Endothelial cell of umbilical vein (primary cell): ENCODE measurements at regions of chr3 and their contacts with region 1.

Region 1: GRCh38 chr3:185764163-185764979 is 60.5 kb downstream of the IGF2BP2 start:
- DNase-seq: peak; percentile 65
- H3K4me3 ChIP-seq: peak overlapping the region in 1 of 3 experiments; percentile 26
- H3K27ac ChIP-seq: peak overlapping the region; percentile 94
- H3K4me1 ChIP-seq: peaks cover 79% of the 10 kb centered on the region
- H3K27me3 ChIP-seq: no peaks in the 10 kb centered on the region
- CTCF ChIP-seq: no peak
- POLR2A ChIP-seq: no peak

Region 2: GRCh38 chr3:185677146-185677829 is 87.1 kb before region 1 on chr3:
- CTCF ChIA-PET with region 1: interaction called, 210 read pairs
- POLR2A ChIA-PET with region 1: no interaction called
- dilution Hi-C with region 1: no loop called
- intact Hi-C with region 1: loop called (anchors 1 kb)
- DNase-seq: peak; percentile 81
- H3K4me3 ChIP-seq: no peak overlapping the region
- H3K27ac ChIP-seq: peak overlapping the region; percentile 36
- H3K4me1 ChIP-seq: peaks cover 7% of the 10 kb centered on the region
- H3K27me3 ChIP-seq: no peaks in the 10 kb centered on the region
- CTCF ChIP-seq: peak; percentile 67 to 70
- POLR2A ChIP-seq: no peak

Region 3: GRCh38 chr3:185693985-185694653 is 70.3 kb before region 1 on chr3:
- CTCF ChIA-PET with region 1: interaction called, 20 read pairs
- POLR2A ChIA-PET with region 1: no interaction called
- dilution Hi-C with region 1: no loop called
- intact Hi-C with region 1: loop called (anchors 2 kb)
- DNase-seq: peak; percentile 49
- H3K4me3 ChIP-seq: no peak overlapping the region
- H3K27ac ChIP-seq: no peak overlapping the region
- H3K4me1 ChIP-seq: peaks cover 12% of the 10 kb centered on the region
- H3K27me3 ChIP-seq: no peaks in the 10 kb centered on the region
- CTCF ChIP-seq: no peak
- POLR2A ChIP-seq: no peak

Region 4: DNA sequence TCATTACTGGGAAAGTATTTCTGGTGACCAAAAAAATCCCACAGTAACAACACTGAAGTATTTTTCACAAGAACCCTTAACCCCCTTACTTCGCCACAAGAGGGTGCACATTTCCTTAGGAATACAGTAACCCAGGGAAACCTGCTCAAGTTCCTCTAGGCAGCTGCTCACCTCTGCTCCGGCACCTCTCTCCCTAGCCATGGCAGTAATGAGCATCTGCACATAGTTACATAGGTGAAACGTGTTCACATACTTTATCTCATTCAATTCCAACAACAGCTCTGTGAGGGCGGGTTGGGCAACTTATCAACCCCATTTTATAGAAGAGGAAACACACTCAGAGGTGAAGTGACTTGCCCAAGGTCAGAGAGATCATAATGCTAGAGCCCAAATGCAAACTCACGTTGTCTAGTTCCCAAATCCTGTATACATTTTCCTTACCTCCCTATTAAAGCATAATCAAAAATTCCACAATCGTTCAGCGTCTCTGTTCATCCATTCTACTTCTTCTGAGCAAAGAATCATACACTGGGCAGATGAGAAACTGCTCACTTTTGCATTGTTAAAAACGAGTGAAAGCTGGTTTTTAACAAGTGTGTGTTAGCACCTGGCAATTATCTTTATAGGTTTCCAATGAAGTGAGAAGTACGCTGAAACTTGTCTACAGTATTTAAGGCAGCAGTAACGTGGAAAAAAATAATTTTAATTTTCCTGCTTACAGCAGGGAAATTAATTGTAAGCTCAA is 30.2 kb before region 1 on chr3:
- CTCF ChIA-PET with region 1: interaction called, 347 read pairs
- POLR2A ChIA-PET with region 1: interaction called, 7 read pairs
- dilution Hi-C with region 1: no loop called
- intact Hi-C with region 1: loop called (anchors 1 kb)
- DNase-seq: peak; percentile 87
- H3K4me3 ChIP-seq: no peak overlapping the region
- H3K27ac ChIP-seq: peak overlapping the region; percentile 100
- H3K4me1 ChIP-seq: peaks cover 93% of the 10 kb centered on the region
- H3K27me3 ChIP-seq: no peaks in the 10 kb centered on the region
- CTCF ChIP-seq: peak; percentile 56 to 62
- POLR2A ChIP-seq: no peak

Region 5: GRCh38 chr3:185781759-185782158 is 17.4 kb after region 1 on chr3:
- CTCF ChIA-PET with region 1: interaction called, 71 read pairs
- POLR2A ChIA-PET with region 1: no interaction called
- dilution Hi-C with region 1: no loop called
- intact Hi-C with region 1: no loop called
- DNase-seq: no peak
- H3K4me3 ChIP-seq: no peak overlapping the region
- H3K27ac ChIP-seq: no peak overlapping the region
- H3K4me1 ChIP-seq: no peaks in the 10 kb centered on the region
- H3K27me3 ChIP-seq: no peaks in the 10 kb centered on the region
- CTCF ChIP-seq: no peak
- POLR2A ChIP-seq: no peak

Region 6: GRCh38 chr3:185807445-185808068 is 43.2 kb after region 1 on chr3:
- CTCF ChIA-PET with region 1: interaction called, 13 read pairs
- POLR2A ChIA-PET with region 1: no interaction called
- dilution Hi-C with region 1: no loop called
- intact Hi-C with region 1: no loop called
- DNase-seq: peak; percentile 84
- H3K4me3 ChIP-seq: no peak overlapping the region
- H3K27ac ChIP-seq: peak overlapping the region; percentile 9
- H3K4me1 ChIP-seq: no peaks in the 10 kb centered on the region
- H3K27me3 ChIP-seq: no peaks in the 10 kb centered on the region
- CTCF ChIP-seq: no peak
- POLR2A ChIP-seq: no peak

Region 7: GRCh38 chr3:185824476-185825378 is 60.4 kb after region 1 on chr3 and contains the start of gene IGF2BP2:
- CTCF ChIA-PET with region 1: interaction called, 51 read pairs
- POLR2A ChIA-PET with region 1: no interaction called
- dilution Hi-C with region 1: no loop called
- intact Hi-C with region 1: loop called (anchors 1 kb)
- DNase-seq: peak; percentile 84
- H3K4me3 ChIP-seq: peak within 1 kb of the TSS; percentile 87 to 100 (median 98)
- H3K27ac ChIP-seq: peak within 1 kb of the TSS; percentile 84
- H3K4me1 ChIP-seq: peaks cover 32% of the 10 kb centered on the region
- H3K27me3 ChIP-seq: no peaks in the 10 kb centered on the region
- CTCF ChIP-seq: peak in 1 of 2 donors; percentile 11
- POLR2A ChIP-seq: peak; percentile 69
- total RNA-seq, gene IGF2BP2: 122 and 130 TPM in 2 replicates

Region 8: DNA sequence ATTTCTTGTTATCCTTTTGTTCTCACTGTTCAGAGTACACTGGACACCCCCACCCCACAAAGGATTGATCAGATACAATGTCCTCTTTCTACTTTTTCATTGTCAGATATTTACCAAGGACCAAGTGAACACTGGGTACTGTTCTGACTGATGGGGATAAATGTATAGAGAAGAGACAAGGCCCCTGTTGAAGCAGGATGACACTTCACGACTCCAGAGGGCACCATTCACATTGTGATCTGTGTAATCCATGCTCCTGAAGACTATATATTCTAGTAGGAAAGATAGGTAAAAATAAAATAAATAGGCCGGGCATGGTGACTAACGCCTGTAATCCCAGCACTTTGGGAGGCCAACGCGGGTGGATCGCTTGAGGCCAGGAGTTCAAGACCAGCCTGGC is 787.0 kb after region 1 on chr3:
- CTCF ChIA-PET with region 1: no interaction called
- POLR2A ChIA-PET with region 1: no interaction called
- dilution Hi-C with region 1: no loop called
- intact Hi-C with region 1: no loop called
- DNase-seq: no peak
- H3K4me3 ChIP-seq: no peak overlapping the region
- H3K27ac ChIP-seq: no peak overlapping the region
- H3K4me1 ChIP-seq: no peaks in the 10 kb centered on the region
- H3K27me3 ChIP-seq: no peaks in the 10 kb centered on the region
- CTCF ChIP-seq: no peak
- POLR2A ChIP-seq: no peak